ENCODE measurements at regions of chr5 and their contacts with region 1.

Region 1: GRCh38 chr5:44774279-44774880 is 34.4 kb upstream of the MRPS30 start:
- DNase-seq: no peak
- H3K4me3 Mint-ChIP-seq: no peak overlapping the region
- H3K27ac Mint-ChIP-seq: no peak overlapping the region
- H3K4me1 Mint-ChIP-seq: no peaks in the 10 kb centered on the region
- H3K27me3 Mint-ChIP-seq: no peaks in the 10 kb centered on the region

Region 2: GRCh38 chr5:43631182-43631910 is 1143.0 kb before region 1 on chr5:
- intact Hi-C with region 1: loop called (anchors 10 kb)
- DNase-seq: peak; percentile 31
- H3K4me3 Mint-ChIP-seq: no peak overlapping the region
- H3K27ac Mint-ChIP-seq: no peak overlapping the region
- H3K4me1 Mint-ChIP-seq: peaks cover 6% of the 10 kb centered on the region
- H3K27me3 Mint-ChIP-seq: no peaks in the 10 kb centered on the region

Region 3: DNA sequence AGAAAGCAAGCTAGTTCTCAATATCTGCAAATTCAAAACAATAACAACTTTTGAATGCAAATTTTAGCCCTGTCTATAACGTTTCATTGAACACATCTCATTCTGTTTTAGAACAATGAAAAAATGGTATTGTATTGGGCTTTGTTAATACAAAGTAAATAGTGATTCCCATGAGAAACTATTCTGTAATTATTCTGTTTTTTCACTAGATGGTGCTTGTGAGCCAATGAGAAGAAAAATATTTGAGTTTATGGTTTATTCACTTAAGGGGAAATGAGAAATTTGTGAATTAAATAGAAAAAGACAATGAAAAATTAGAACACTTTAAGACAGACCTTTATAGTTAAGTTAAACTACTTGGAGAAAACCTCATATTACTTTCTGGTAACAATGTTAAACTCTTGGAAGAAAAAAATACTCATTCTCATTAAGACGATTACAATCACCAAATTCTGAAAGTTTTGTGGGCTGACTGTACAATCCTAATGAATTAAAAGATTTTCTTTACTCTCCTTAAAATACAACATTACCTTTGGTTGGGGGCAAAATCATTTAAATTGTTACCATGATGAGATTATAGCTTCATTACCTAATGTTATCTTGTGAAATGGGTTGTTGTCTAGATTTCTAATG is 1044.4 kb before region 1 on chr5:
- intact Hi-C with region 1: loop called (anchors 1 kb)
- DNase-seq: no peak
- H3K4me3 Mint-ChIP-seq: no peak overlapping the region
- H3K27ac Mint-ChIP-seq: no peak overlapping the region
- H3K4me1 Mint-ChIP-seq: no peaks in the 10 kb centered on the region
- H3K27me3 Mint-ChIP-seq: peaks cover 2% of the 10 kb centered on the region

Region 4: GRCh38 chr5:44536650-44537260 is 237.6 kb before region 1 on chr5:
- intact Hi-C with region 1: loop called (anchors 2 kb)
- DNase-seq: no peak
- H3K4me3 Mint-ChIP-seq: no peak overlapping the region
- H3K27ac Mint-ChIP-seq: no peak overlapping the region
- H3K4me1 Mint-ChIP-seq: no peaks in the 10 kb centered on the region
- H3K27me3 Mint-ChIP-seq: no peaks in the 10 kb centered on the region

Region 5: DNA sequence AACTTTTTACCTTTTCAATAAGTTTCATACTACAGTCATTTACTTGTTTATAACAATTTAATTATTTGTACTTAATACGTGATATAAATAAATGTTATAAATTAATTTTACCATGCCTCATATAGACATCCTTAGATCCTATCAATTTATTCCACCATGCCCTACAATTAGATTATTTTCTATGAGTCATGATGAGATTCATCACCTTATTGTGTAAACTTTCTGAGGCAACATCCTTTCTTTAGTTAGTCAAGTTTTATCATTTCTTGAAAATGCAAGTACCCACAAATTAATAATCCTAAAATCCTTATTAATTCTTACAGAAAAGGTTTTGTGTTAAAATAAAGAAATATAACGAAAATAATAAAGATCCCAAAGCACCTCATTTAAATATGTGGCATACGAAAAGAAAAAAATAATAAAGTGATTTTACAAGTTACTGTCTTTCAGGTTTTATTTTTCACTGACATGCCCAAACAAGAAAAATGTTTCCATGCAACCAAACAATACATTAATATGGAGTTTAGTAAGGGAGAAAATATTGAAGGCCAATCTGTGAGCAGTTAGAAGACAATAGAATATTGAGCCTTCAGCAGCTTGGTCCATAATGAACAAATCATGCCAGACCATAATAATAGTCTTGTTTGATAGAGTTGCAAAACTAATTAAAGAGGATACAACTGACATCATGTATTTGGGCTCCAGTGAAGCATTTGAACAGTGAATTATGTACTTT is 154.3 kb before region 1 on chr5:
- intact Hi-C with region 1: no loop called
- DNase-seq: no peak
- H3K4me3 Mint-ChIP-seq: no peak overlapping the region
- H3K27ac Mint-ChIP-seq: no peak overlapping the region
- H3K4me1 Mint-ChIP-seq: no peaks in the 10 kb centered on the region
- H3K27me3 Mint-ChIP-seq: no peaks in the 10 kb centered on the region